Activated CD4-positive, alpha-beta memory T cell treated with anti-CD3 and anti-CD28 coated beads, Interleukin-2, amount 10 ng/mL, durations not matched to agents 7 days and 5 days (primary cell): ENCODE measurements at regions of chr19 and their contacts with region 1.

Region 1: DNA sequence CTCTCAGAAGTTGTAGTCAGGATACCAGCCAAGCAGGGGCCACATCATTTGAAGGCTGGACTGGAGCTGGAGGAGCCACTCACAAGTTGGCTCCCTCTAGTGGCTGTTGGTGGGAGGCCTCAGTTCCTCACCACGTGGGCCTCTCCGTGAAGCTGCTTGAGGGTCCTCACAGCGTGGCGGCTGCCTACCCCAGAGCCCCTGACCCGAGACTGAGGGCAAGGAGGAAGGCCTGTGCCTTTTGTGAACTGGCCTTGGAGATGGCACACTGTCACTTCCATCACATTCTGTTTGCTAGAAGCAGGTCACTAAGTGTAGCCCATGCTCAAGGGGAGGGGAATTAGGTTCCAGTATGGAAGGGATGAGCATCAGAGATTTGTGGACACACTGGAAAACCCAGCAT is 14.6 kb downstream of the GNA11 start:
- DNase-seq: peak; percentile 76
- H3K4me3 Mint-ChIP-seq: no peak overlapping the region
- H3K27ac Mint-ChIP-seq: no peak overlapping the region
- H3K4me1 Mint-ChIP-seq: peaks cover 8% of the 10 kb centered on the region
- H3K27me3 Mint-ChIP-seq: peaks cover 3% of the 10 kb centered on the region

Region 2: GRCh38 chr19:2962045-2962561 is 146.7 kb before region 1 on chr19:
- CTCF ChIA-PET with region 1: interaction called, 60 read pairs
- POLR2A ChIA-PET with region 1: no interaction called
- DNase-seq: peak; percentile 54
- H3K4me3 Mint-ChIP-seq: peak overlapping the region; percentile 48
- H3K27ac Mint-ChIP-seq: no peak overlapping the region
- H3K4me1 Mint-ChIP-seq: peaks cover 5% of the 10 kb centered on the region
- H3K27me3 Mint-ChIP-seq: no peaks in the 10 kb centered on the region

Region 3: DNA sequence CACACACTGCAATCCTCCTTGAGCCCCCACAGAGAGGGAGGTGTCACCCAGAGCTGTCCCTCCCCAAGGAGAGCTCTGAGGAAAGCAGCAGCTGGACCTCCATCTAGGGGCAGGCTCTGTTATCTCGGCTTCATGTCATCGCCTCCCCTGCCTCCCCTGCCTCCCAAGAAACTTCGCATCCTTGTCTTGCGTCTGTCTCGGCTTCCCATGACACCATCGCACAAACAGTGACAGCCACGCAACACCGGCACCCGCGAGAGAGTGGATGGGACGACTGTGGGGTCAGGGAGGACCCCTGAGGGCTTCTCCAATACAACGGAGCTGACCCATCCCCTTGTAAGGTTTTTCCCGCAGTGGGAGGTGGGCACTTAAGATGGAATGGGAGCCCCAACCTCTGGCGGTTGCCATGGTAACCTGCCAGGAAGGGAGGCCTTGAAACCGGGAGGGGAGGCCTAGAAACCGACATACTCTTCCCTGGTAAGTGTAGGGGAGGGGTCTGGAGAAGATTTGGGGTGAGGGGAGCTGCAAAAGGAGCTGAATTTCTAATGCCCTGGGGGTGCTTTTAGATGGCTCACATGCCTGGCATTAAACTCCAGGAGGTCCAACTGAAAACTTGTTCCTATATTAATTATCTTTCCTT is 96.0 kb before region 1 on chr19:
- CTCF ChIA-PET with region 1: no interaction called
- POLR2A ChIA-PET with region 1: no interaction called
- DNase-seq: no peak
- H3K4me3 Mint-ChIP-seq: no peak overlapping the region
- H3K27ac Mint-ChIP-seq: no peak overlapping the region
- H3K4me1 Mint-ChIP-seq: no peaks in the 10 kb centered on the region
- H3K27me3 Mint-ChIP-seq: no peaks in the 10 kb centered on the region

Region 4: DNA sequence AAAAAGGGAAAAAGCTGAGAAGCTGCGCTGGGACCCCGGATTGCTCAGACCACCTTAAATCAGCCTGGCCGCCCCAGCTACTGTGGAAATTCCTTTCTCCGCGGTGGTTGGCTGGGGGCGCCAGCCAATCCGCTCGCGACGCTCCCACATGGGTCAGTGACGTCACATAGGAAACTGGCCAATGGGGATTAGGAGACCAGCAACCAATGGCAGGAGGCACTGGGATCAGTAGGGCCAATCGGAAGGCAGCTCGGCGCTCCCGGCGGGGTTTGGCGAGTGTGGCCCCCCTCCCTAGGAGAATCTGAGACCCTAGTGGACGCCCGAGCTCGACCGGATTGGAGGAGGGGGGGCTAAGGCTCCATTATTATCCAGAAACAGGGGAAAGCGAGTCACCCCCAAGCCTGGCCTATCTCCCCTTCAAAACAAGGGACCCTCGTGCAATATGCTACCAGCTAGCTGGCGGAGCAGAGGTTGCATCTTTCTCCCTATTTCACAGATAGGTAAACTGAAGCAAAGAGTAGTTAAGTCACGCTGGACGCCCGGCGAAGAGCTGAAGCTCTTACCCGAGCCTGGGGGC is 73.1 kb before region 1 on chr19:
- CTCF ChIA-PET with region 1: interaction called, 12 read pairs
- POLR2A ChIA-PET with region 1: no interaction called
- DNase-seq: peak; percentile 96
- H3K4me3 Mint-ChIP-seq: peak overlapping the region; percentile 83
- H3K27ac Mint-ChIP-seq: peak overlapping the region; percentile 91
- H3K4me1 Mint-ChIP-seq: peaks cover 23% of the 10 kb centered on the region
- H3K27me3 Mint-ChIP-seq: peaks cover 25% of the 10 kb centered on the region

Region 5: GRCh38 chr19:3087769-3088168 is 21.0 kb before region 1 on chr19:
- CTCF ChIA-PET with region 1: interaction called, 14 read pairs
- POLR2A ChIA-PET with region 1: no interaction called
- DNase-seq: no peak
- H3K4me3 Mint-ChIP-seq: no peak overlapping the region
- H3K27ac Mint-ChIP-seq: no peak overlapping the region
- H3K4me1 Mint-ChIP-seq: no peaks in the 10 kb centered on the region
- H3K27me3 Mint-ChIP-seq: peaks cover 5% of the 10 kb centered on the region

Region 6: DNA sequence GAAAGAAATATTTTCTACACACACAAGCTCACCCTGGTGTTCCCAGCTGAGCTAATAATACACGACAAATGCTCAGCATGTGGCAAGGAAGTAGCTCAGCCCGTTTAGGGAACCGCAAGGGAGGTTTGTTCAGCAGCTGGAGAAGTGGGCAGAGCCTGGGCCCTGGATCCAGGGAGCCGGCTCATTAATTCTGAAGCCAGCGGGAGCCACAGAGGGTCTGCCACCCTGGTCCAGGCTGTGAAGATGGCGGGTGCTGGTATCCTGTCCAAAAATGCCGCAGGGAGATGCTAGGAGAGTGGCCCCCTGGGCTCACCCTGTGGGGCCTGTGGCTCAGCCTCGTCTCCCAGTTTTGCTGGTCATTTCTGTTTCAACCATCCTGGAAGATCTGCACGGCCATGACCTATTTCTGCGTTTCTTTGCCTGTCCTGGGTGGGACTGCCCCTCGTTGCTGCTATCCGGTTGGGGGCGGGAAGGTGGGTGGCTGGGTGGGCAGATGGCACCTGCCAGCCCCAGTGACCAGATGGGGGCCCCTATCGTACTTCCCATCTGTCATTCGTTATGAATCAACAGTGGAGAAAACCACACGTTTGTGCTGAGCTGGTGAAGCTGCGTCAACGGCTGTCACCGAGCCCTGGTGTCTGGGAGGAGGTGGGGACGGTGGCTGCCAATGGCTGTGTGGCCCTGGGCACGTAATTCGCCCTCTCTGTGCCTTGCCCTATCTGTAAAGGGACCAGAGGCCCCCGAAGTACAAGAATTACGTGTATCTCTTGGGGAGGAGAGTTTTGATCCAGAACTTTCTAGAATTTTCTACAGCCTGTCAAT is 24.4 kb after region 1 on chr19:
- CTCF ChIA-PET with region 1: interaction called, 12 read pairs
- POLR2A ChIA-PET with region 1: no interaction called
- DNase-seq: peak; percentile 92
- H3K4me3 Mint-ChIP-seq: peak overlapping the region; percentile 67
- H3K27ac Mint-ChIP-seq: peak overlapping the region; percentile 98
- H3K4me1 Mint-ChIP-seq: peaks cover 61% of the 10 kb centered on the region
- H3K27me3 Mint-ChIP-seq: no peaks in the 10 kb centered on the region

Region 7: DNA sequence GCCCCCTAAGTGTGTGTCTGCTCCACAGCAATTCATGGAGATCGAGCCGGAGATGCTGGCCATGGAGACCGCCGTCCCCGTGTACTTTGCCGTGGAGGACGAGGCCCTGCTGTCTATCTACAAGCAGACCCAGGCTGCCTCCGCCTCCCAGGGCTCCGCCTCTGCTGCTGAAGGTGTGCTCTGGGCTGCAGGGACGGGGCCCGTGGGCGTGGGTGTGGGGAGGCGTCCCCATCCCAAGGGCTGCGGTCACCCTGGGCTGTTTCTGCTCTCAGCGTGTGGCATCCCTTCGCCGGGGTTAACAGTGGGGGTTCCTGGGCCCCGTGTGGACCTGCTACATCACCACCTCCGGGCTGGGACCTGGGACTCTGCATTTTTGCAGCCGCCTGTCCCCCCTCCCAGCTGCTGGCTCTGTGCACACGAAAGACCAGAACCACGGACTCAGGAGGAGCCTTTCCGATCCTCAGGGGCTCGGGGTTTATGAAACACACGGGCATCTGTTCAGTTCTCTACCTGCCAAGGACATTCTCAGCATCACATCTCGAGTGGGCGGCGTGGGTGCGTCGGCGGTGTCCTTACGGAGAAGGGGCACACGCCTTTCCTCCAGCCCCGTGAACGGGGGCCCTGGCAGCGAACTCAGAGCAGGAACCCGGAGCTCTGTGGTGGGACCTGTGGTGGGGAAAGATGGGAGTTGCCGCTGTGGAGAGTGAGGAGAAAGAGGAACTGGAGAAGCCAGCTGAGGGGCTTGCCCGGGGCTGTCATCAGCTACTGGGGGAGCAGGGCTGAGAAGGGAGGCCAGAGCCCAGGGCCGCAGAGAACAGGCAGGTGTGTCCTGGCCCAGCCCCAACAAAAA is 84.7 kb after region 1 on chr19:
- CTCF ChIA-PET with region 1: no interaction called
- POLR2A ChIA-PET with region 1: no interaction called
- DNase-seq: no peak
- H3K4me3 Mint-ChIP-seq: no peak overlapping the region
- H3K27ac Mint-ChIP-seq: no peak overlapping the region
- H3K4me1 Mint-ChIP-seq: peaks cover 13% of the 10 kb centered on the region
- H3K27me3 Mint-ChIP-seq: no peaks in the 10 kb centered on the region